ENCODE measurements at regions of chr13 and their contacts with region 1.

Region 1: DNA sequence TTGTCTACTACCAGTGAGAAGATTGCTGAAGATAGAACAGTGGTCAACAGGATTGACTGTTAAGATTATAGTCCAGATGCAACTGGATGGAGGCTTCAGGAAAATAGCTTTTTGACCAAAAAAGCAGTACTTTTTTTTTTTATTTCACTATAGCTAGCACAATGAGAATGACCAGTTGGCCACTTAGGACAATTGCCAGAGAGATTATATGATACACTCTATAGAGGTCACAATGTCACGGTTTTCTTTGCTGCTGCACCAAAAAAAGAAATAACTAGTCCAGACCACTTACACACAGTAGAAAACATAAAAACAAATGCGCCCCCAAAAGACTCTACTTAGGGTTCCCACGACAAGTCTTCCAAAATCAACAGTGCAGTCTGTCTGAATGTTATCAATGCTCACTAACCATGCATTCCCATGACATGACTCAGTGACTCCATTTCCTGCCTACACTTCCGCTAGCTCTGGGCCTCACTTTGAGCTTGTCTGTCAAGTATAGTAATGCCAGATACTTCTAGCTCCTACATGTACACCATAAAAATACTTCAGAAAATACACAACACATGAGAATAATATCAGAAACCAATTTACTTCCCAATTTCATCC is 209.1 kb upstream of the STARD13 start:
- DNase-seq: no peak
- ATAC-seq: peak; percentile 73; the same call in 1 of the 2 replicates
- H3K4me3 ChIP-seq: no peak overlapping the region
- H3K27ac ChIP-seq: no peak overlapping the region
- H3K4me1 ChIP-seq: no peaks in the 10 kb centered on the region
- H3K27me3 ChIP-seq: no peaks in the 10 kb centered on the region
- CTCF ChIP-seq: no peak

Region 2: DNA sequence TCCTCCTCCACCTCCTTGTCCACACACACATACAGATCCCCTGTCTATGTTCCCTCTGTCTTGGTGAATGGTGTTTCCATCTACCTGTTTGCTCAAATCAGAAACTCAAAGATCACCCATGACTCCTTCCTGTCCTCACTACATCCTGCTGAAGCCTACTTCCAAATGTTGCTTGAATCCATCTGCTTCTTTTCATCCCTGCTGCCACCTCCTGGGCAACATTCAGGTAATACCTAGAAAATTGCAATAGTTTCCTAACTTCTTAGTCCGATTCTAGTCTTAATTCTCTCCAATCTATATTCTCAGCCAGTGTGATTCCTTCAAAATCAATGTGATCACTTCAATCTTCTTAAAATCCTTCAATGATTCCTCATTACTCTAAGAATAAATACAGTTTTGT is 53.7 kb before region 1 on chr13:
- CTCF ChIA-PET with region 1: no interaction called
- POLR2A ChIA-PET with region 1: no interaction called
- in situ Hi-C with region 1: no loop called
- intact Hi-C with region 1: no loop called
- DNase-seq: no peak
- ATAC-seq: no peak
- H3K4me3 ChIP-seq: no peak overlapping the region
- H3K27ac ChIP-seq: no peak overlapping the region
- H3K4me1 ChIP-seq: no peaks in the 10 kb centered on the region
- H3K27me3 ChIP-seq: no peaks in the 10 kb centered on the region
- CTCF ChIP-seq: peak; percentile 43; the same call in 1 of the 2 replicates

Region 3: GRCh38 chr13:33761740-33762139 is 267.0 kb after region 1 on chr13:
- CTCF ChIA-PET with region 1: no interaction called
- POLR2A ChIA-PET with region 1: interaction called, 12 read pairs
- in situ Hi-C with region 1: no loop called
- intact Hi-C with region 1: no loop called
- DNase-seq: no peak
- ATAC-seq: no peak
- H3K4me3 ChIP-seq: no peak overlapping the region
- H3K27ac ChIP-seq: no peak overlapping the region
- H3K4me1 ChIP-seq: no peaks in the 10 kb centered on the region
- H3K27me3 ChIP-seq: no peaks in the 10 kb centered on the region
- CTCF ChIP-seq: peak; percentile 30; the same call in 1 of the 2 replicates